ENCODE measurements at regions of chr13 and their contacts with region 1.

Region 1: GRCh38 chr13:98672944-98673545 is 79.4 kb downstream of the SLC15A1 start:
- DNase-seq: peak in 8 of 9 donors; percentile 16 to 57 (median 40)
- ATAC-seq: peak; percentile 79
- H3K4me3 ChIP-seq: no peak overlapping the region
- H3K4me3 Mint-ChIP-seq: no peak overlapping the region
- H3K27ac ChIP-seq: no peak overlapping the region
- H3K27ac Mint-ChIP-seq: no peak overlapping the region
- H3K4me1 ChIP-seq: no peaks in the 10 kb centered on the region
- H3K4me1 Mint-ChIP-seq: peaks cover 0 to 8% (median 0%) of the 10 kb centered on the region in 7 donors
- H3K27me3 ChIP-seq: no peaks in the 10 kb centered on the region
- H3K27me3 Mint-ChIP-seq: peaks cover 0 to 11% (median 0%) of the 10 kb centered on the region in 5 donors

Region 2: GRCh38 chr13:97855570-97856303 is 817.3 kb before region 1 on chr13:
- CTCF ChIA-PET with region 1: no interaction called
- POLR2A ChIA-PET with region 1: no interaction called
- intact Hi-C with region 1: loop called in 1 of 2 experiments (anchors 1 kb)
- DNase-seq: peak in 4 of 9 donors; percentile 6 to 22 (median 16)
- ATAC-seq: peak; percentile 45
- H3K4me3 ChIP-seq: no peak overlapping the region
- H3K4me3 Mint-ChIP-seq: no peak overlapping the region
- H3K27ac ChIP-seq: no peak overlapping the region
- H3K27ac Mint-ChIP-seq: no peak overlapping the region
- H3K4me1 ChIP-seq: no peaks in the 10 kb centered on the region
- H3K4me1 Mint-ChIP-seq: peaks cover 0 to 1% (median 0%) of the 10 kb centered on the region in 7 donors
- H3K27me3 ChIP-seq: no peaks in the 10 kb centered on the region
- H3K27me3 Mint-ChIP-seq: peaks cover 5 to 35% (median 21%) of the 10 kb centered on the region in 5 donors

Region 3: GRCh38 chr13:98014766-98015165 is 658.3 kb before region 1 on chr13:
- CTCF ChIA-PET with region 1: no interaction called
- POLR2A ChIA-PET with region 1: no interaction called
- intact Hi-C with region 1: loop called in 1 of 2 experiments (anchors 5 kb)
- DNase-seq: no peak
- ATAC-seq: no peak
- H3K4me3 ChIP-seq: no peak overlapping the region
- H3K4me3 Mint-ChIP-seq: no peak overlapping the region
- H3K27ac ChIP-seq: no peak overlapping the region
- H3K27ac Mint-ChIP-seq: peak overlapping the region in 6 of 9 donors; percentile 9 to 48 (median 20)
- H3K4me1 ChIP-seq: no peaks in the 10 kb centered on the region
- H3K4me1 Mint-ChIP-seq: peaks cover 0 to 6% (median 0%) of the 10 kb centered on the region in 7 donors
- H3K27me3 ChIP-seq: no peaks in the 10 kb centered on the region
- H3K27me3 Mint-ChIP-seq: no peaks in the 10 kb centered on the region

Region 4: DNA sequence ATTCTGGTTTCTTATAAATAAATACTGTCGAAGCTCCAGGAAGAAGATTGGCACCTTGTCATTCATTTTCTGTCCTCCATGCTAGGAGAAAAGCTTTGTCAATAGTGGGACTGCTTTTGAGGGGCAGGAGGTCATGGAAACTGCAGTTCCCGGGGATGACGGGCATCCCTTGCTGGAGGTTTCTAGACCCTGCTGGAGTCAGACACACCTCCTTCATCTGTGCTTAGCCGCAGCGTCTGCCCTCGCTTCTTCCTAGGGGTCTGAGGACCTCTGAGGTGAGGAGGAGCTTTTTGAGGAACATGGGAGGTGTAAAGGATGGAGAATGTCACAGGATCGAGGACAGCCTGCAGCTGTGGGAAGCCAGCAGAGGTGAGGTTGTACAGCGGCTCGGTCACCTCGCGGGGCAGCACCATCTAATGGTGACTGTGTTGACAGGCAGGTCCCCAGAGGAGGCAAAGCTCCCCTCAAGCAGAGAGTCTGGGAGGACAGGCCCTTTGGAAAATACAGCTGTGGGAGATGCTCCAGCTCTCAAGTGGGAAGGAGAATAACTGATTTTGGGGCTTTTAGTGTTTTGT is 323.2 kb before region 1 on chr13:
- CTCF ChIA-PET with region 1: no interaction called
- POLR2A ChIA-PET with region 1: no interaction called
- intact Hi-C with region 1: loop called in 1 of 2 experiments (anchors 1 kb)
- DNase-seq: no peak
- ATAC-seq: no peak
- H3K4me3 ChIP-seq: no peak overlapping the region
- H3K4me3 Mint-ChIP-seq: no peak overlapping the region
- H3K27ac ChIP-seq: no peak overlapping the region
- H3K27ac Mint-ChIP-seq: no peak overlapping the region
- H3K4me1 ChIP-seq: no peaks in the 10 kb centered on the region
- H3K4me1 Mint-ChIP-seq: peaks cover 0 to 2% (median 0%) of the 10 kb centered on the region in 7 donors
- H3K27me3 ChIP-seq: no peaks in the 10 kb centered on the region
- H3K27me3 Mint-ChIP-seq: peaks cover 0 to 4% (median 0%) of the 10 kb centered on the region in 5 donors

Region 5: GRCh38 chr13:98445340-98446233 is 227.5 kb before region 1 on chr13:
- CTCF ChIA-PET with region 1: interaction called, 7 read pairs
- POLR2A ChIA-PET with region 1: no interaction called
- intact Hi-C with region 1: loop called (anchors 1 kb)
- DNase-seq: peak; percentile 59 to 82 (median 73)
- ATAC-seq: peak; percentile 95
- H3K4me3 ChIP-seq: no peak overlapping the region
- H3K4me3 Mint-ChIP-seq: peak overlapping the region in 9 of 10 donors; percentile 8 to 76 (median 68)
- H3K27ac ChIP-seq: peak overlapping the region; percentile 58
- H3K27ac Mint-ChIP-seq: peak overlapping the region; percentile 46 to 92 (median 88)
- H3K4me1 ChIP-seq: peaks cover 10 to 15% of the 10 kb centered on the region in 2 donors
- H3K4me1 Mint-ChIP-seq: peaks cover 0 to 23% (median 14%) of the 10 kb centered on the region in 7 donors
- H3K27me3 ChIP-seq: no peaks in the 10 kb centered on the region
- H3K27me3 Mint-ChIP-seq: no peaks in the 10 kb centered on the region

Measured in naive thymus-derived CD4-positive, alpha-beta T cell (primary cell).